ENCODE measurements at regions of chrX and their contacts with region 1.

Region 1: GRCh38 chrX:38803586-38804431 is 2.5 kb downstream of the MID1IP1 start:
- DNase-seq: peak; percentile 93
- H3K4me3 Mint-ChIP-seq: peak overlapping the region; percentile 96
- H3K27ac Mint-ChIP-seq: peak overlapping the region; percentile 99
- H3K4me1 Mint-ChIP-seq: peaks cover 16% of the 10 kb centered on the region
- H3K27me3 Mint-ChIP-seq: no peaks in the 10 kb centered on the region

Region 2: GRCh38 chrX:38726597-38726996 is 77.2 kb before region 1 on chrX:
- intact Hi-C with region 1: no loop called
- DNase-seq: no peak
- H3K4me3 Mint-ChIP-seq: no peak overlapping the region
- H3K27ac Mint-ChIP-seq: no peak overlapping the region
- H3K4me1 Mint-ChIP-seq: no peaks in the 10 kb centered on the region
- H3K27me3 Mint-ChIP-seq: no peaks in the 10 kb centered on the region

Region 3: GRCh38 chrX:38985375-38985774 is 181.6 kb after region 1 on chrX:
- intact Hi-C with region 1: loop called (anchors 10 kb)
- DNase-seq: peak; percentile 52
- H3K4me3 Mint-ChIP-seq: no peak overlapping the region
- H3K27ac Mint-ChIP-seq: no peak overlapping the region
- H3K4me1 Mint-ChIP-seq: peaks cover 1% of the 10 kb centered on the region
- H3K27me3 Mint-ChIP-seq: peaks cover 4% of the 10 kb centered on the region

Region 4: DNA sequence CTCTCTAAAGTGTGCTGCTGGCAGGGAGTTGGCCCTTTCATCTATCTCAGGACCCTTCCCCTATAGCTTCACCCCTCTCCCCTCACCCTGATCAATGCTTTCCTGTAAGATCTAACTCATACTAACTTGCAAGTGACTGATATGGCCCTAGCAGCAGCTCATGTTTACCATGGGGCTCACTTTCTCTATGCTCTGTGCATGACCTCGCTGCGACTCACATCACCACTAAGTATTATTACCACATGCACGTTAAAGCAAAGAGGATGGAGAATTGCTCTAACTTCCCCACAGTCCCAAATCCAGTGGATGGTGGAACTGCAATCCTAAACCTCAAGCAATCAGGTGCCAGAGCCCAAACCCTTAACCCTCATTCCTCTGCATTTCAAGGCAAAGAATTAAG is 624.1 kb after region 1 on chrX:
- intact Hi-C with region 1: loop called (anchors 5 kb)
- DNase-seq: peak; percentile 58
- H3K4me3 Mint-ChIP-seq: peak overlapping the region; percentile 12
- H3K27ac Mint-ChIP-seq: peak overlapping the region; percentile 95
- H3K4me1 Mint-ChIP-seq: peaks cover 58% of the 10 kb centered on the region
- H3K27me3 Mint-ChIP-seq: no peaks in the 10 kb centered on the region

Region 5: GRCh38 chrX:39772057-39772832 is 968.4 kb after region 1 on chrX:
- intact Hi-C with region 1: loop called (anchors 2 kb)
- DNase-seq: peak; percentile 81
- H3K4me3 Mint-ChIP-seq: peak overlapping the region; percentile 82
- H3K27ac Mint-ChIP-seq: peak overlapping the region; percentile 99
- H3K4me1 Mint-ChIP-seq: peaks cover 37% of the 10 kb centered on the region
- H3K27me3 Mint-ChIP-seq: no peaks in the 10 kb centered on the region

Region 6: DNA sequence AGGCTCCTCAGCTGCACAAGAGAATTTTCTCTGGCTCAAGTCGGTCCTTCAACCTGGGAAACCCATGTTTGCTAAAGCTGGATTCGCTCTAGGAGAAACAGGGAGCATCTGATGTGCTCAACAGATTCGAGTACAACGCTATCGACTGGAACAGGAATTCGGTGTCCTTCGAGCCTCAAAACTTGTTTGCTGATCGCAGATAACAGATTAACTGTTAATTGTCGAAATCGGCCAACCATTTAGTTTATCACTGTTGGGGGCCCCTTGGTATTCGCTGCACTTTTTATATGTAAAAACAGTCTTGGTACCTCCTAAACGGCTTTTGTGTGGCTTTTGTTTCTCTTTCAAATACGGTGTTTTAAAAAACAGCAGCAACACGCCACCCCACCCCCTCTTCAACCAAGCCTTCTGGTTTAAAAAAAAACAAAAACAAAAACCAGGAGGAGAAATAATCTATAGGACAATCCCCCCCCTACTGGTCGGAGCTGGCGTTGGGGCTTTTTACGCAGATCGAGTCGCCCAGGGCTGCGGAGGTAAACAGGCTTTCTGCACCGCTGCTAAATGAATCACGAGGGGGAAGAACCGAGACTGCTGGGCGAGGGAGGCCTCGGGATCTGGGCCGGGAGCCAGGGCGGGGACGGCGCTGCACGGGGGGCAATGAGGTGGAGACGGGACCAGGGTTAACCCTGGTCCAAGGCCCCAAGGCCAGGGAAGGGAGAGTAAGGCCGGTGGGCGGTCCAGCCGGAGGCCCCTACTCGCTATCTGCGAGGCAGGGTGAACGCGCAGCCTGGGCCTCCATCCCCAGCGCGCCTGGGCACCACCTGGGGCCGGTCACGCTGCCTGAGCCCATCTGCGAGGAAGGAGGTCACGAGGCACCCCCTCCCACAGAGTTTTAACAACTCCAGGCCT is 1365.6 kb after region 1 on chrX:
- intact Hi-C with region 1: loop called (anchors 5 kb)
- DNase-seq: peak; percentile 93
- H3K4me3 Mint-ChIP-seq: peak overlapping the region; percentile 93
- H3K27ac Mint-ChIP-seq: peak overlapping the region; percentile 93
- H3K4me1 Mint-ChIP-seq: peaks cover 44% of the 10 kb centered on the region
- H3K27me3 Mint-ChIP-seq: peaks cover under 1% of the 10 kb centered on the region

Region 7: DNA sequence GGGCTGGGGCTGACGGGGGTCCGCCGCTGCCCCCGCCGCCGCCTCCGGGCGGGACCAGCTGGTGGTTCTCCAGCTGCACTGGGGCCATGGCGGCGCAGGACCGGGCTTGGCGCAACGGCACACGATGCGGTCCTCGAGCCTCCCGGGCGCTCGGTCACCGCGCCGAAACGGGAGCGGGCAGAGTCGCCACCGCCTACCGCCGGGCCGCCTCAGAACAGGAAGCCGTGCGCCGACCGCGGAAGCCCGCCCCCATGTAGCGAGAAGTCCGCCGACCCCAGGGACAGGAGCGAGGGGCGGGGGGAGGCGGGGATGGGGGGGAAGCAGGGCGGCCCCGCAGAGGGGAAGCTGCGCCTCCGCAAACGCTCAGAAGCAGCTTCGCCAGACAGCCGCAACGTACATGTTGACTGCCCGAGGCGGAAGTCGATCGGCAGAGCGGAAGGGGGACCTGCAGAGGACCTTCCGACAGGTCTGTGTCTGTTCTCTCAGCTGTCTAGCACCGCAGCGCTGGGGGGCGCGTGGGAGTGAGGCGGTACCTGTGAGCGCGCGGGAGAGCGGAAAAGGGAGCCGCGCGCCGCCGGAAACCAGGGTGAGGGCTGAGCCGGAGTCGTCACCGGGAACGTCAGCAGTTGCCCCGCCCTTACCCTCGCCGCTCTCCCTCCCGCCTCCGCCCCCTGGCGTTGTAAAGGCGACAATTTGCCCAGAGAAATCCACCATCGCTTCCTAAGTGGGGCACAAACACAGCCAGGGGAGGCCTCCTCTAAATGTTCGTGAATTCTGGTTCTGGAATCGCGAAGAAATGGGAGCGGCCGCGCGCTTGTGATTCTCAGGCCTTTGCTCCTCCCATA is 1931.7 kb after region 1 on chrX and contains the start of gene MED14:
- intact Hi-C with region 1: loop called (anchors 10 kb)
- DNase-seq: peak; percentile 95
- H3K4me3 Mint-ChIP-seq: peak within 1 kb of the TSS; percentile 86
- H3K27ac Mint-ChIP-seq: peak within 1 kb of the TSS; percentile 94
- H3K4me1 Mint-ChIP-seq: peaks cover 21% of the 10 kb centered on the region
- H3K27me3 Mint-ChIP-seq: no peaks in the 10 kb centered on the region
- total RNA-seq, gene MED14: 43.6 and 48.2 TPM in 2 replicates